ENCODE measurements at regions of chr6 and their contacts with region 1.

Region 1: GRCh38 chr6:96897383-96898240 is at the start of gene NDUFAF4:
- DNase-seq: peak; percentile 96
- H3K4me3 Mint-ChIP-seq: peak within 1 kb of the TSS; percentile 91
- H3K27ac Mint-ChIP-seq: peak within 1 kb of the TSS; percentile 92
- H3K4me1 Mint-ChIP-seq: peaks cover 28% of the 10 kb centered on the region
- H3K27me3 Mint-ChIP-seq: peaks cover 9% of the 10 kb centered on the region
- total RNA-seq, gene NDUFAF4: 49.5 to 53.3 TPM

Region 2: DNA sequence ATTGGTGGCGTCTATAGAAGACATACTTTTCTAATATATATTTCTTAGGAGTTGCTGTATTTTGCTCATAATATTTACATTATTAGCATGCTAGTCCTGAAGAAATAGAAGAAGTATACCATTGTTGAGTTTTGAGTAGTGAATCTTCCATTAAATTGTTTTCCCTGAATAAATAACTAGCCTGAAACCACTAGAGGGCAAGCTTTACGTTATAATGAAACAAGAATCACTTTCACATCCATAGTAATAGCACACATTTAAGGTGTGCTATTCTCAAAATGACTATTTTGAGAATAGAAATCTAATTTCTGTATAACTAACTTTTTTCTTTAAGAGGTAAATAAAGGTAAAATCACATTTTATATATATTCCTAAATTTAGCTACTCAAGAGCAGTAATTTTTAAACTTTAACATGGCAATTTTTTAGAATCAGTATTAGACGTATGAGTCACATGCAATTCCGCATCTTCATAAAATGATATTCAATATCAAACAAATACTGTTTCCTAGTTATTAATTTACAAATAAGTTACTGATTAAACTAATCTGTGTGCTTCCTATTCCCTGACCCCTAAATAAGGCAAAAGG is 1533.5 kb before region 1 on chr6:
- CTCF ChIA-PET with region 1: no interaction called
- intact Hi-C with region 1: loop called (anchors 10 kb)
- DNase-seq: no peak
- H3K4me3 Mint-ChIP-seq: no peak overlapping the region
- H3K27ac Mint-ChIP-seq: no peak overlapping the region
- H3K4me1 Mint-ChIP-seq: no peaks in the 10 kb centered on the region
- H3K27me3 Mint-ChIP-seq: no peaks in the 10 kb centered on the region

Region 3: DNA sequence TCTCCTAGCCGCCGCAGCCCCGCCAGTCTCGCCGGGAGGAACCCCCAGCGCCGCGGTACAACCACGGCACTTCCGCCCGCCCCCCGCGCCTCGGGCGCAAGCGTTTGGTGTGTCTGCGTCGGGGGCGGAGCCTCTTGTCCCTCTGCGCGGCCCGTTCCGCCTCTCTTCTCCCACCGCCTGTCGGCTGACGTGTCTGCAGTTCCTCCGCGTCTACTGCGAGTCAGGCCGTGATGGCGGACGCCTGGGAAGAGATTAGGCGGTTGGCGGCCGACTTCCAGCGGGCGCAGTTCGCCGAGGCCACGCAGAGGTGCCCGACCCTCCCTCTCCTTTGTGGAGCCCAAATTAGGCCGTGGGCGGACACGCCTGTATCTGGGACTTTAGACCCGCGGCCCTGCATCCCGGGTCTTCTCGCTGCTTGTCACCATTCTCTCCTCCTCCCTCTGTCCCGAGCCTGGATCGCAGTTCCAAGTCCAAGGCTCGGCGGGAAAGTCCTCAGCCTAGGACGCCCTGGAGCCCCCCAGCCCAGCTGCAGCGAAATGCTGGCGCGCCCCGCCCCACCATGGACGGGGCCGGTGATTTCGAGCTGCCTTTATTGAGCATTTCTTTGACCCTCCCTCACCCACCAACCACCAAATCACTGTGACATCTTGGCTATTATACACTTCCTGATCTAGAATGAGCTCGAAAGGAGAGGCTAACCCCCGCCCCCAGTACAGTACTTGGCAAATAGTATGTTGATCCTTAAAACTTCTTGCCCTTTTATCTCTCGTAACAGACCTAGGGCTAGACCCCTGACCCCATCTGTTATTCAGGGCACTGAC is 375.8 kb before region 1 on chr6 and contains the start of gene UFL1:
- CTCF ChIA-PET with region 1: no interaction called
- intact Hi-C with region 1: loop called (anchors 1 kb)
- DNase-seq: peak; percentile 92
- H3K4me3 Mint-ChIP-seq: peak within 1 kb of the TSS; percentile 98
- H3K27ac Mint-ChIP-seq: peak within 1 kb of the TSS; percentile 99
- H3K4me1 Mint-ChIP-seq: peaks cover 13% of the 10 kb centered on the region
- H3K27me3 Mint-ChIP-seq: no peaks in the 10 kb centered on the region
- total RNA-seq, gene UFL1: 28.3 to 28.7 TPM

Region 4: DNA sequence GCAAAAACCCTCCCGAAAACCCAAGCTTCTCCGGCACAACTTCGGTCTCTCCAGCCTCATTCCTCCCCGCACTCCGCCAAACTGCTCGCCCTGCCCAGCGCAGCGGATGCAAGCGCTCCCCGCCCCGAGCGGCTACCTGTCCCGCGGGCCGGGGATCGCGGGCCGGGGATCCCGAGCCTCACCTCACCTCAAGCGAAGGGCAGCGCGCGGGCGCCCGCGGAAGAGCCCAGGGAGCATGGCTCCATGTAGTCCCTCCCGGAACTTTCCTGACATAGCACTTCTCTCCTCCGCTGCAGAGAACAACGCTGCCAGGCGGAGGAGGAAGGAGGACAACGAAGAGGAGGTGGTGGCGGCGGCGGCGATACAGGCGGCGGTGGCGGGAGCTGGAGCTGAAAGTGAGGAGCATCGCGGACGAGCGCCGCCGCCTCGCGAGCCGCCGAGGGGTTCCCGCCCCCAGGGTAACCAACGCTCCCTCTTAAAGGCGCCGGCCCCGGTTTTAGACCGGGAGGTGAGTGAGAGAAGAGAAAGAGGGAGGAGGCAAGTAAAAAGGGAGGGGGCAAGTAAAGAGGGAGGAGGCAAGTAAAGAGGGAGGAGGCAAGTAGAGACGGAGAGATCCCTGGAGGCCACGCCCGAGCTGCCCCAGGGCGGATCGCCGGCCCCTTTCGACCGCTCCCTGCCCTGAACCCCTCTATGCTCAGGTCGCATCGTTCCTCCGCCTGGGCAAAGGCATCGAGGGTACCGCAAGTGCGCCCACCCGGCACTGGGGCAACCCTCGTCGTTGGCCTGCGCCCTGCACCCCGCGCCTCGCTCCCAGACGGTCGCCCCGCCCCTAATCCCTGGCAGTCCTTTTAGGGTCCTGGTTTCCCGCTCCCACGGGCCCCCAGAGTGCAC is 60.3 kb before region 1 on chr6 and contains the start of gene GPR63:
- CTCF ChIA-PET with region 1: interaction called, 4 read pairs
- intact Hi-C with region 1: loop called (anchors 1 kb)
- DNase-seq: peak; percentile 75
- H3K4me3 Mint-ChIP-seq: peak within 1 kb of the TSS; percentile 82
- H3K27ac Mint-ChIP-seq: no peak within 1 kb of the TSS
- H3K4me1 Mint-ChIP-seq: peaks cover 10% of the 10 kb centered on the region
- H3K27me3 Mint-ChIP-seq: peaks cover 54% of the 10 kb centered on the region
- total RNA-seq, gene GPR63: 0.72 to 0.81 TPM

Region 5: GRCh38 chr6:96878143-96878542 is 19.5 kb before region 1 on chr6:
- CTCF ChIA-PET with region 1: no interaction called
- intact Hi-C with region 1: no loop called
- DNase-seq: no peak
- H3K4me3 Mint-ChIP-seq: no peak overlapping the region
- H3K27ac Mint-ChIP-seq: no peak overlapping the region
- H3K4me1 Mint-ChIP-seq: no peaks in the 10 kb centered on the region
- H3K27me3 Mint-ChIP-seq: no peaks in the 10 kb centered on the region

Region 6: GRCh38 chr6:96975852-96976251 is 78.2 kb after region 1 on chr6:
- CTCF ChIA-PET with region 1: no interaction called
- intact Hi-C with region 1: no loop called
- DNase-seq: no peak
- H3K4me3 Mint-ChIP-seq: no peak overlapping the region
- H3K27ac Mint-ChIP-seq: no peak overlapping the region
- H3K4me1 Mint-ChIP-seq: no peaks in the 10 kb centered on the region
- H3K27me3 Mint-ChIP-seq: no peaks in the 10 kb centered on the region

Region 7: GRCh38 chr6:97053643-97054411 is 156.2 kb after region 1 on chr6:
- CTCF ChIA-PET with region 1: interaction called, 34 read pairs
- intact Hi-C with region 1: loop called (anchors 1 kb)
- DNase-seq: no peak
- H3K4me3 Mint-ChIP-seq: no peak overlapping the region
- H3K27ac Mint-ChIP-seq: no peak overlapping the region
- H3K4me1 Mint-ChIP-seq: peaks cover 14% of the 10 kb centered on the region
- H3K27me3 Mint-ChIP-seq: no peaks in the 10 kb centered on the region

Region 8: DNA sequence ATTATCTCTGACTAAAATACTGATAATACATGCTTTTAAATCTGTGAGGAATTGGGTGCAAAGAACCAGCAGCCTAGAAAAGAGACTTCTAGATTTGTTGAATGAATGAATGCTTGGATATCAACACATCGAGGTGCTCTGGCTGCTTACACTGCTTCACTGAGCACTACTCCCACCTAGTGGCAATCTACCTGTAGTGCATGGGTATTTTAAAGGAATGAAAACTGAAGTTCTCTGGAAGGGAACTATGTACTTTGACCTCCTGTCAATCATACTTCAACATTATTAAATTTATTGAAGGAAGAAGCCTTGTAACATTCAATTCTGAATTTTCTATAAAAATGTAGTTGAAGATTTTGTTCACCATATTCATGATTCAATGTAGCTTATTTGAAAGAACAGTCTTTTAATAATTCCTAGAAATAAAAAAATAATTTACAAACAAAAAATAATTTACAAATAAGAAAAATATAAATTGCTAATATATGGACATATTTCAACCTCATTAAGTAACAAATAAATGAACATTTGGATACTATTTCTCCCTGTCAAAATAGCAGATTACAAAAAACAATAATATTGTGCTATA is 496.6 kb after region 1 on chr6:
- CTCF ChIA-PET with region 1: no interaction called
- intact Hi-C with region 1: loop called (anchors 1 kb)
- DNase-seq: peak; percentile 57
- H3K4me3 Mint-ChIP-seq: no peak overlapping the region
- H3K27ac Mint-ChIP-seq: no peak overlapping the region
- H3K4me1 Mint-ChIP-seq: no peaks in the 10 kb centered on the region
- H3K27me3 Mint-ChIP-seq: peaks cover 10% of the 10 kb centered on the region